Panc1 (cell line): ENCODE measurements at regions of chr3 and their contacts with region 1.

Region 1: GRCh38 chr3:131172502-131173200 is 146.0 kb downstream of the NEK11 start:
- DNase-seq: no peak
- ATAC-seq: no peak
- H3K4me3 ChIP-seq: no peak overlapping the region
- H3K27ac ChIP-seq: no peak overlapping the region
- H3K4me1 ChIP-seq: no peaks in the 10 kb centered on the region
- H3K27me3 ChIP-seq: no peaks in the 10 kb centered on the region
- CTCF ChIP-seq: no peak

Region 2: GRCh38 chr3:131427226-131427625 is 254.6 kb after region 1 on chr3:
- CTCF ChIA-PET with region 1: no interaction called
- POLR2A ChIA-PET with region 1: interaction called, 15 read pairs
- in situ Hi-C with region 1: no loop called
- intact Hi-C with region 1: no loop called
- DNase-seq: no peak
- ATAC-seq: no peak
- H3K4me3 ChIP-seq: no peak overlapping the region
- H3K27ac ChIP-seq: no peak overlapping the region
- H3K4me1 ChIP-seq: no peaks in the 10 kb centered on the region
- H3K27me3 ChIP-seq: peaks cover 4% of the 10 kb centered on the region
- CTCF ChIP-seq: no peak